Left lung (tissue), 14 donors: ENCODE measurements at regions of chr7 and their contacts with region 1.

Region 1: DNA sequence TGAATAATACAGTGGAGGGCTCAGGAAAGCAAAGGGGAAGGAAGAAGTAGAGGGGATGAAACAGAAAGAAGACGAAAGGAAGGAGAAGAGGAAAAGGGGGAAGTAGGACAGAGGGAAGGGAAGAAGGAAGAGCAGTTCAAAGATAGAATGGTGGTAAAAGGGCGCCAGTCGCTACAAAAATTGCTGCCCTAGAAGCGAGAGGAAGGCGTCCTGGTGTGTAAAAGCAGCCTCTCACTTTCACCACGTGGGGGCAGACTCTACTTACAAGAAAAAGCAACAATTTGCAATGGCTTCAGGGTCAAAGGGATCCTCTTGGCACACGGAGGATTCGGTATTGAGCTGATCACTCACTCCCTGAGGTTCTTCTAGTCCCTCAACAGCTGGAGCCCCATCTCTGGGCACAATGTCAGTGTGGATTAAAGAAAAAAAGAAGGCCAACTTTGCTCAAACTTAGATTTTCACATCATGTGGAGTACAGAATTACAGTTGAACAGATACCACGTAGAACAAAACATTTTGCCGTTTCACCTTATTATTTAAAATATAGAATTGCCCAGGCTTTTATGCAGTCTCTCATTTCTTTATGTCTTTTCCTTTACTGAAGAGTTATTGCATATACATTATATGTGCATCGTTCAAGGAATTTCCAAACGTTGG is 31.4 kb upstream of the NPVF start:
- DNase-seq: peak in 2 of 4 donors; percentile 74 to 83
- ATAC-seq: peak; percentile 89
- H3K4me3 ChIP-seq: no peak overlapping the region
- H3K27ac ChIP-seq: no peak overlapping the region
- H3K4me1 ChIP-seq: peaks cover 4 to 24% of the 10 kb centered on the region in 2 donors
- H3K27me3 ChIP-seq: peaks cover 0 to 4% of the 10 kb centered on the region in 2 donors
- CTCF ChIP-seq: peak; percentile 66 to 72

Region 2: DNA sequence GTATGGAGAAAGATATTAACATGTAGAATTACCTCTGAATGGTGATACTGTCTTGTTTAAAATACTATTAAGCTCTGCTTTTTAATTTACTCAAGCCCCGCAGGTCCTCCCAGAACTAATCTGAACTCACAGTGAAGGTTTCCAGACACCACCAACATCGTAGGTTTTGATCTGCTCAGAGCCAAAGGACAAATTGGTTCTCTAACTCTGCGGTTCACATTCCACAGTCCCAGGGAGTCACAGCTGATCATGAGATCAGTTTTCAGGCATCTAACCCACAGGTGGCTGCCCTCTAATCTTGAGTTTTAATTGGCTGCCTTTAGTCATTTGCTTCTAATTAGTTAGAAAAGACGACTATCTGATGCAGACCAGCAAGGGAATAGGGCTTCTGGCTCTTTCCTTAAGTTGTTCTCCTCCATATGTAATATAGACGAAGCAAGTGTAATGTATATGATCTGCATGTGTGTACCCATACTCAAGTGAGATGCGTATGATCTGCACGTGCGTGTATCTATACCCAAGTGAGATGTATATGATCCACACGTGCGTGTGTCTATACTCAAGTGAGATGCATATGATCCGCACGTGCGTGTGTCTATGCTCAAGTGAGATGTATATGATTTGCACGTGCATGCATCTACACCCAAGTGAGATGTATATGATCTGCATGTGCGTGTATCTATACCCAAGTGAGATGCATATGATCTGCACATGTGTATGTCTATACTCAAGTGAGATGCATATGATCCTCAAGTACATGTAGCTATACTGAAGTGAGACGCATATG is 300.1 kb after region 1 on chr7:
- intact Hi-C with region 1: loop called in 1 of 2 experiments (anchors 5 kb)
- DNase-seq: no peak
- ATAC-seq: no peak
- H3K4me3 ChIP-seq: no peak overlapping the region
- H3K27ac ChIP-seq: no peak overlapping the region
- H3K4me1 ChIP-seq: no peaks in the 10 kb centered on the region
- H3K27me3 ChIP-seq: no peaks in the 10 kb centered on the region
- CTCF ChIP-seq: no peak